ENCODE measurements at regions of chr14 and their contacts with region 1.

Region 1: GRCh38 chr14:105448706-105449111 is 25.9 kb upstream of the CRIP2 start:
- DNase-seq: peak; percentile 77
- ATAC-seq: peak; percentile 96
- H3K4me3 Mint-ChIP-seq: no peak overlapping the region
- H3K27ac Mint-ChIP-seq: no peak overlapping the region
- H3K4me1 Mint-ChIP-seq: no peaks in the 10 kb centered on the region
- H3K27me3 Mint-ChIP-seq: no peaks in the 10 kb centered on the region

Region 2: GRCh38 chr14:105375635-105376057 is 73.1 kb before region 1 on chr14:
- CTCF ChIA-PET with region 1: interaction called, 8 read pairs
- POLR2A ChIA-PET with region 1: no interaction called
- intact Hi-C with region 1: loop called (anchors 1 to 2 kb)
- DNase-seq: peak; percentile 83
- ATAC-seq: peak; percentile 77
- H3K4me3 Mint-ChIP-seq: no peak overlapping the region
- H3K27ac Mint-ChIP-seq: peak overlapping the region; percentile 78
- H3K4me1 Mint-ChIP-seq: peaks cover 12% of the 10 kb centered on the region
- H3K27me3 Mint-ChIP-seq: no peaks in the 10 kb centered on the region